ENCODE measurements at regions of chr5 and their contacts with region 1.

Region 1: GRCh38 chr5:50501491-50502228 is 60.6 kb upstream of the EMB start:
- DNase-seq: no peak
- H3K4me3 Mint-ChIP-seq: peak overlapping the region; percentile 19
- H3K27ac Mint-ChIP-seq: no peak overlapping the region
- H3K4me1 Mint-ChIP-seq: peaks cover 24% of the 10 kb centered on the region
- H3K27me3 Mint-ChIP-seq: peaks cover 4% of the 10 kb centered on the region

Region 2: DNA sequence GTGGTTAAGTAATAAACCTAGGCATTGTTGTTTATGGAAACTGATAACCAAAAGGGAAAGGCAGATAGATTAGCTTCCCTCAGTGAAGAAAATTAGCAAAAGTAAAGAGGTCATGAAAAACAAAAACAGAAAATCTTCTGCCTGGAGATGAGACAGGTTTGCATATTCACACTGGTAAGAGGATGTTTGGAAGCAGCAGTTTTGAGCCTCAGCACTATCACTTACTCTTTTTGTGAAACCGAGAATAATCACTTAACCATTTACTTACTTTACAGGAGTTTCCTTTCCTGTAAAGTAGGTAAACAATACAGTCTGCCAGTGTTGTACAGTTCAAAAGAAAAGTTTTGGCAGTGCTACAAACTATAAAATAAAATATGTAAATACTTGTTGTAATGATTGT is 25.1 kb before region 1 on chr5:
- intact Hi-C with region 1: loop called (anchors 2 kb)
- DNase-seq: no peak
- H3K4me3 Mint-ChIP-seq: peak overlapping the region; percentile 15
- H3K27ac Mint-ChIP-seq: no peak overlapping the region
- H3K4me1 Mint-ChIP-seq: peaks cover 34% of the 10 kb centered on the region
- H3K27me3 Mint-ChIP-seq: no peaks in the 10 kb centered on the region

Region 3: DNA sequence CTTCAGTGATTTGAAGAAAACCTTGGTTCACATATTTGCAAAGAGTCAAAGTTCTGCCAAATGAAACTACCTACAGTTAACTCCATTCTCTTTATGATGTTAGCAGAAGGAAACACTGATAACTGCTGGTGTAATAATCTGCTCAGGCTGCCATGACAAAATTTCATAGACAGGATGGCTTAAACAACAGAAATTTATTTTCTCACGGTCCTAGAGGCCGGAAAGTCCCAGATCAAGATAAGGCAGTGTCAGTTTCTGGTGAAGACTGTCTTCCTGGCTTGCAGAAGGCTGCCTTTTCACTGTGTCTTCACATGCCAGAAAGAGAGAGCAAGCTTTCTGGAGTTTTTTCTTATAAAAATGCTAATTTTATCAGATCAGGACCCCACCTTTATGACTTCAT is 62.4 kb after region 1 on chr5:
- intact Hi-C with region 1: loop called (anchors 1 kb)
- DNase-seq: peak; percentile 39
- H3K4me3 Mint-ChIP-seq: peak overlapping the region; percentile 23
- H3K27ac Mint-ChIP-seq: peak overlapping the region; percentile 31
- H3K4me1 Mint-ChIP-seq: peaks cover 43% of the 10 kb centered on the region
- H3K27me3 Mint-ChIP-seq: peaks cover 2% of the 10 kb centered on the region

Region 4: DNA sequence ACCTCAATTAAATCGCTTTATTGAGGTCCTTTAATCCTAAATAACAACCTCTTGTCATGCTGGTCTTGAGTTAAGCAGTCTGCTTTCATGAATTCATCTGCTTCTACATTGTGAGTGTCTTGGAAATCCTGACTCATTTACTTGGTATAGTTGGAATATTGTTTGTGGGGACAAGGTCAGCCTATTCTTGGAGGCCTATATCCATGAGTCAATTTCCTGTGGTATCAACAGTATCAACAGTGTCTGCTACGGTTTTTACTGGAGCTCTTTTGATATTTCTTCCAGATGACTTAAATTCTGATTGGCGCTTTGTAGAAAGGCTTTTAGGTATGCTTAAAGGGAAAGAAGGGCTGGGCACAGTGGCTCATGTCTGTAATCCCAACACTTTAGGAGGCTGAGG is 93.5 kb after region 1 on chr5:
- intact Hi-C with region 1: loop called (anchors 2 kb)
- DNase-seq: no peak
- H3K4me3 Mint-ChIP-seq: no peak overlapping the region
- H3K27ac Mint-ChIP-seq: no peak overlapping the region
- H3K4me1 Mint-ChIP-seq: peaks cover 55% of the 10 kb centered on the region
- H3K27me3 Mint-ChIP-seq: no peaks in the 10 kb centered on the region

Region 5: DNA sequence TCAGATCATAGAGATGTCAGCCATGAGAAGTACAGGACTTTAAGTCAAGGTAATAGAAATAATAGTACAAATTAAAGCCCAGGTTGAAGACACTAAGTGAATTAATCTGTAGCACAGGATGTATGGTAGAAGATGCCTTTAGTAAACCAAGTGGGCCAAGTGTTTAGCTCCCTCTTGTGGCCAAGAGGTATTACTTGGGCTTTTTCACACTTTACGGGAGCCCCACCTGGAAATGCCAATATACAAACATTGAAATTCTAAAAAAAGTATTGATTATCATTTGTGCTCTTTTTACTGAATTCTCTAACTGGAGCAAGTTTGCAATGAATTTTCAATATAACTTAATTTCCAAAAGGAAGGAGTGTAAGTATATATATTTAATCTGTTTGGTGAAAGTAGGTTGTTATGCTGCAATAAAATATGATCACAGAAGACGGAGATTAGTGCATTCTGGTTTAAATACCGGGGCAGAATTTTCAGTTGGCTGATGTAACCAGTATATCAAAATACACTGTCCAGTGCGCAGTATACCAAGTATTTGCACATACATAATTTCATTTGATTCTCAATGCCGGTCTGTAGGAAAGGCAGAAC is 249.5 kb after region 1 on chr5:
- intact Hi-C with region 1: loop called (anchors 5 kb)
- DNase-seq: no peak
- H3K4me3 Mint-ChIP-seq: no peak overlapping the region
- H3K27ac Mint-ChIP-seq: no peak overlapping the region
- H3K4me1 Mint-ChIP-seq: peaks cover 41% of the 10 kb centered on the region
- H3K27me3 Mint-ChIP-seq: no peaks in the 10 kb centered on the region

Measured in activated T-helper 1 cell treated with anti-CD3 and anti-CD28 coated beads, Interleukin-12 subunit alpha, Interleukin-12 subunit beta, Interleukin-2, Interleukin-4 antibody, amounts not matched to agents 30 ng/mL and 10 ng/mL and 1 ng/mL, durations not matched to agents 14 hours and 24 hours and 36 hours (primary cell).